Caco-2 (cell line): ENCODE measurements at regions of chrX and their contacts with region 1.

Region 1: GRCh38 chrX:100636321-100636991 is at the start of gene TSPAN6:
- DNase-seq: peak; percentile 89
- H3K4me3 ChIP-seq: peak within 1 kb of the TSS; percentile 81
- H3K4me3 Mint-ChIP-seq: peak within 1 kb of the TSS; percentile 78
- H3K27ac Mint-ChIP-seq: peak within 1 kb of the TSS; percentile 93
- H3K4me1 ChIP-seq: peaks cover 5% of the 10 kb centered on the region
- H3K4me1 Mint-ChIP-seq: peaks cover 19% of the 10 kb centered on the region
- H3K27me3 ChIP-seq: no peaks in the 10 kb centered on the region
- H3K27me3 Mint-ChIP-seq: no peaks in the 10 kb centered on the region
- CTCF ChIP-seq: peak in 1 of 2 experiments; percentile 53
- total RNA-seq, gene TSPAN6: 135 and 137 TPM in 2 replicates

Region 2: GRCh38 chrX:100615005-100615404 is 21.5 kb before region 1 on chrX:
- CTCF ChIA-PET with region 1: interaction called, 9 read pairs
- POLR2A ChIA-PET with region 1: interaction called, 13 read pairs
- intact Hi-C with region 1: loop called (anchors 1 kb)
- DNase-seq: peak; percentile 38 to 55
- H3K4me3 ChIP-seq: no peak overlapping the region
- H3K4me3 Mint-ChIP-seq: no peak overlapping the region
- H3K27ac Mint-ChIP-seq: peak overlapping the region; percentile 64
- H3K4me1 ChIP-seq: 0 out of 2 replicates have a peak, but pooled peaks cover 7% of the 10 kb centered on the region
- H3K4me1 Mint-ChIP-seq: no peaks in the 10 kb centered on the region
- H3K27me3 ChIP-seq: no peaks in the 10 kb centered on the region
- H3K27me3 Mint-ChIP-seq: no peaks in the 10 kb centered on the region
- CTCF ChIP-seq: peak; percentile 22 to 59

Region 3: GRCh38 chrX:100649550-100650356 is 13.3 kb after region 1 on chrX:
- CTCF ChIA-PET with region 1: interaction called, 14 read pairs
- POLR2A ChIA-PET with region 1: interaction called, 12 read pairs
- intact Hi-C with region 1: loop called (anchors 1 kb)
- DNase-seq: peak; percentile 88 to 92
- H3K4me3 ChIP-seq: no peak overlapping the region
- H3K4me3 Mint-ChIP-seq: peak overlapping the region; percentile 71
- H3K27ac Mint-ChIP-seq: peak overlapping the region; percentile 97
- H3K4me1 ChIP-seq: peaks cover 47% of the 10 kb centered on the region
- H3K4me1 Mint-ChIP-seq: peaks cover 26% of the 10 kb centered on the region
- H3K27me3 ChIP-seq: no peaks in the 10 kb centered on the region
- H3K27me3 Mint-ChIP-seq: no peaks in the 10 kb centered on the region
- CTCF ChIP-seq: no peak